ENCODE measurements at regions of chr1 and their contacts with region 1.

Region 1: DNA sequence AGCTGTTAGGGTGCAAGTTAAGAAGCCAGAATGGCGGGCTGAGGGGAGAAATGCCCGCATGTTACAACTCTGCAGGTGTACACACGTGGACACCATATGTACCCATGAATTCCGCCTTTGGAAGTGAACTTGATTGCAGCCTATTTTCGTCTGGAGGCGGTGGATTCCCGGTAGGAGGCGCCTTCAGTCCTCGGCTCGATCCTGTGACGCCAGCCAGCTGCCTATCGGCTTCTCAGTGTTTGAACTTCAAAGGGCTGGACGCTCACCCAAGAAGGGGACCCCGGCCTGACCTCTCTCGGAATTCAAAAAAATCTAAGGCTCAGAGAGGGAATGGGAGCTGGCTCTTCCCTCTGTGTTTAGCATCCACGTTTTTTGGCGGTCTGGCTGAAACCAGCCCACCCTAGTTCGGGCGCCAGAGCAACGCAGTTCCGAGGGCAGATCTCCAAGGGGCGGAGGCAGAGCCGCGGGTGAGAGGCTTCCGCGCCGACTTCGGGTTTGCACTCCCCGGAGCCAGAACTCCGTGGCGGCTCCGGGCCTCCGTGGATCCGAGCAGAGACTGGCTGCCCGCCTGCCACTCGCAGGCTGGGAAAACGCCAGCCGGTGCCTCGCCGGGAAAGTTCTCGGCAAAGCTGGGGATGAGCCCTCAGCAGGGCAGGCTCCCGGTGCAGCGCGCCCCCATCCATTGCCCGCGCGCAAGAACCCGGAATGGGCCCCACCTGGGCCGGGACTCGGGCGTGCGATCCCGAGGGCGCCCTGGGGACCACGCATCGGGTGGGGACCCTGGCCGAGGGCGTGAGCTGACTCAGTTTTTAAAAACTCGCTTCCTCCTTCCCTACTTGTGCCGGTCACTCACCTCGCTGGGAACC is 996 bp upstream of the TMEM51 start:
- DNase-seq: peak; percentile 89

Region 2: GRCh38 chr1:15218287-15219279 is 66.0 kb after region 1 on chr1:
- intact Hi-C with region 1: no loop called
- DNase-seq: no peak

Region 3: GRCh38 chr1:15272009-15272788 is 119.6 kb after region 1 on chr1:
- intact Hi-C with region 1: loop called (anchors 2 kb)
- DNase-seq: no peak

Region 4: DNA sequence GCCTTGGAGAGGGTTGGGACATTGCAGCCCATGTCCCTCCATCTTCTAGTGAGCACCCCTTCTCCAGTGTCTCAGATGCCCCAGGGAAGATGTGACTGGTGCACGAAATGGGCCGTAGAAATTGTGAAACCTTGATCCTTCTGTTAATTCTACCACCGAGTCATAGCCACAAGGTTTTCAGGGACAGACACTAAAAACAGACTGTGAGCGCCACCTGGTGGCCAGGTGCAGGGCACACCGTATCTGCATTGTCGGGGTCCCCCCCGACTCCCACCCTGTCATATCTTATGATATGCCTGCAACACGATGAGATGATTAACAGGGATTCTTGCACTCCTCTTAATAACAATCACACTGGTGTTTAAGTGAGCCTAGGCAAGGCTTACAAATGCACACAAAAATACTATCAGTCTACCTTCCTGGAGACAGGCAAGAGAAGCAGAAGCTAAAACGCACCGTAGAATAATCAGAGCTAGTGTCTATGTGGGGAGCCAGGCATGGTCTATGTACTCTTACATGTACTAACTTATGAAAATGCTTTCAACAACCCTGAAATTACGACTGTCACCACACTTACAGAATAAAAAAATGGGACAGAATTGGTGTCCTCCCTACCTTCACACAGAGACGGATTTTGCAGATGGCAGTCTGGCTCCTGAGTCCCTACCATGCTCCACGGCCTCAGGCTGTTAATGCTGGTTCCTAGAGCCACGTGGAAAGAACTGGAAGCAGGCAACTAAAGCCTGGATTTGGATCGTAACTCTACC is 152.3 kb after region 1 on chr1:
- intact Hi-C with region 1: loop called (anchors 5 kb)
- DNase-seq: no peak

Region 5: DNA sequence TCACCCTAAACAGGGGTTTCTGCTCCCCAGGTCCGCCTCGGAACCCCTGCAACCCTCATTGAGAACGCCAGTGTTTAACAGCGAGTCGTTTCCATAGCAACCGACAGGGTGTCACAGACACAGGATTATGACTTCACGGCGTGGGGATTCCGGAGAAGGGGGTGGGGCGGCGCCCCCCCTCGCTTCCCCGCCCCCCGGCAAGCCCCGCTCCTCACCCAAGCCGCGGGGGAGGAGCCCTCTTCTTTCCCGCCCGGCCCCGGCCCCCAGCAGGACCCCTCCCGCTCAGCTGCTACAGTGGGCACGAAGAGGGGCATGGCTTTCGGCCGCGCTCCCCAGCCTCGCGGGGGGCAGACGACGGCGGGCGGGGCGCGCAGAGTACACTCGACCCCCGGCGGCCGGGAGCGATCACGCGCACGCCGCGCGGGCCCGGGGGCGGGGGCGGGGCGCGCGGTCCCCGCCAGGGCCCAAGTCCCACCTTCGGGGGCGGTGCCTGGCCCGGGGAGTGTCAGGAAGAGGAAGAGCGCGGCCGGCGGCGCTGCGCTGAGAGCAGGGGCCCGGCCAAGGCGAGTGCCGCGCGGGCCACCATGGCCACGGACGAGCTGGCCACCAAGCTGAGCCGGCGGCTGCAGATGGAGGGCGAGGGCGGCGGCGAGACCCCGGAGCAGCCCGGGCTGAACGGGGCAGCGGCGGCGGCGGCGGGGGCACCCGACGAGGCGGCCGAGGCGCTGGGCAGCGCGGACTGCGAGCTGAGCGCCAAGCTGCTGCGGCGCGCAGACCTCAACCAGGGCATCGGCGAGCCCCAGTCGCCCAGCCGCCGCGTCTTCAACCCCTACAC is 257.1 kb after region 1 on chr1 and contains the start of gene EFHD2:
- intact Hi-C with region 1: loop called (anchors 10 kb)
- DNase-seq: peak; percentile 95
- total RNA-seq, gene EFHD2: 14.3 TPM

Measured in cardiac septum (tissue), 1 donor.